MCF 10A (cell line): ENCODE measurements at regions of chr19 and their contacts with region 1.

Region 1: GRCh38 chr19:35468637-35469036 is 20.6 kb downstream of the FFAR2 start:
- DNase-seq: peak; percentile 52
- H3K4me3 Mint-ChIP-seq: no peak overlapping the region
- H3K27ac Mint-ChIP-seq: no peak overlapping the region
- H3K4me1 Mint-ChIP-seq: no peaks in the 10 kb centered on the region
- H3K27me3 Mint-ChIP-seq: peaks cover 22% of the 10 kb centered on the region
- CTCF ChIP-seq: peak; percentile 57

Region 2: DNA sequence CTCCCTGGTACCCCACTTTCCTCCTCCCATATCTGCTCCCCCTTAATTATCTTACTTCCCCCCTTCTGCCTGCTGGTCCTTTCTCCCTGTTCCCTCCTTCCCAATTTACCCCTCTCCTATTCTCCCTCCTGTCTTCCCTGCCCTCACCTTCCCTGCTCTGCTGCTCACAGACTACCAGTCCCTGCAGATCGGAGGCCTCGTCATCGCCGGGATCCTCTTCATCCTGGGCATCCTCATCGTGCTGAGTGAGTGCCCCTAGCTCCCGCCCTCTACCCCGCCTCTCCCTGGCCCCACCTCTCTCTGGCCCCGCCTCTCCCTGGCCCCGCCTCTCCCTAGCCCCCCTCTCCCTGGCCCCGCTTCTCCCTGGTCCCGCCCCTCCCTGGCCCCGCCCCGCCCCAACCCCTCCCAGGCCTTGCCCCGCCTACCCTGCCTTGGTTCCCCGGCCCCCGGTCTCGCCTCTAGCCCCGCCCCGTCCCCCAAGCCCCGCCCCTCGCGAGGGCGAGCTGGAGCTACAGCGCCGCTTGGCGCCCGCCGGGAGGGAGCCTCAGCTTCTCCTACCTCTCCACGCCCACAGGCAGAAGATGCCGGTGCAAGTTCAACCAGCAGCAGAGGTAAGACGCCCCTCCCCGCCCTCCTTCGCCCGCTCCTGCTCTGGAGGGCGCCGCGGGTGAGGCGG is 327.5 kb before region 1 on chr19:
- CTCF ChIA-PET with region 1: no interaction called
- POLR2A ChIA-PET with region 1: no interaction called
- intact Hi-C with region 1: loop called (anchors 10 kb)
- DNase-seq: peak; percentile 93
- H3K4me3 Mint-ChIP-seq: no peak overlapping the region
- H3K27ac Mint-ChIP-seq: no peak overlapping the region
- H3K4me1 Mint-ChIP-seq: peaks cover 15% of the 10 kb centered on the region
- H3K27me3 Mint-ChIP-seq: peaks cover 19% of the 10 kb centered on the region
- CTCF ChIP-seq: peak; percentile 57

Region 3: DNA sequence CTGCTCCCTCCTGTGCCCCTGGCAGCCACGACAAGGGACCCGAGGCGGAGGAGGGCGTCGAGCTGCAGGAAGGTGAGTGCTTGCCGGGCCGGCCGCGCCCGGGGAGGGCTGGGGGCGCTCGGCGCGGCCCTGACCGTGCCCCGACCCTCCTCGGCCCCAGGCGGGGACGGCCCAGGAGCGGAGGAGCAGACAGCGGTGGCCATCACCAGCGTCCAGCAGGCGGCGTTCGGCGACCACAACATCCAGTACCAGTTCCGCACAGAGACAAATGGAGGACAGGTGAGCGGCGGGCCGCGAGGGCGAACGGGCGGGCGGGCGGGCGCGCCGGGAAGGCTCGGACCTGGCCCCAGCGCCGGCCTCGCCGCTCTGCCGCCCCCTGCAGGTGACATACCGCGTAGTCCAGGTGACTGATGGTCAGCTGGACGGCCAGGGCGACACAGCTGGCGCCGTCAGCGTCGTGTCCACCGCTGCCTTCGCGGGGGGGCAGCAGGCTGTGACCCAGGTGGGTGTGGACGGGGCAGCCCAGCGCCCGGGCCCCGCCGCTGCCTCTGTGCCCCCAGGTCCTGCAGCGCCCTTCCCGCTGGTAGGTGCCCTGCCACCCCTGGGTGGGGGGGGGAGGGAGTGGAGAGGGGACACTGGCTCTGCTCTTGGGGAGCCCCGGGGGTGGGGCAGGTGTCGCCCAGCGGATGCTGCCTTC is 199.1 kb before region 1 on chr19:
- CTCF ChIA-PET with region 1: interaction called, 4 read pairs
- POLR2A ChIA-PET with region 1: interaction called, 4 read pairs
- intact Hi-C with region 1: loop called (anchors 1 kb)
- DNase-seq: peak; percentile 86
- H3K4me3 Mint-ChIP-seq: peak overlapping the region; percentile 83
- H3K27ac Mint-ChIP-seq: no peak overlapping the region
- H3K4me1 Mint-ChIP-seq: peaks cover 15% of the 10 kb centered on the region
- H3K27me3 Mint-ChIP-seq: no peaks in the 10 kb centered on the region
- CTCF ChIP-seq: peak; percentile 94

Region 4: GRCh38 chr19:35352448-35353304 is 116.0 kb before region 1 on chr19:
- CTCF ChIA-PET with region 1: interaction called, 143 read pairs
- POLR2A ChIA-PET with region 1: interaction called, 14 read pairs
- intact Hi-C with region 1: loop called (anchors 1 kb)
- DNase-seq: peak; percentile 79
- H3K4me3 Mint-ChIP-seq: no peak overlapping the region
- H3K27ac Mint-ChIP-seq: no peak overlapping the region
- H3K4me1 Mint-ChIP-seq: peaks cover 4% of the 10 kb centered on the region
- H3K27me3 Mint-ChIP-seq: peaks cover 33% of the 10 kb centered on the region
- CTCF ChIP-seq: peak; percentile 79

Region 5: GRCh38 chr19:35417713-35418534 is 50.7 kb before region 1 on chr19:
- CTCF ChIA-PET with region 1: interaction called, 7 read pairs
- POLR2A ChIA-PET with region 1: no interaction called
- intact Hi-C with region 1: loop called (anchors 1 kb)
- DNase-seq: no peak
- H3K4me3 Mint-ChIP-seq: no peak overlapping the region
- H3K27ac Mint-ChIP-seq: no peak overlapping the region
- H3K4me1 Mint-ChIP-seq: no peaks in the 10 kb centered on the region
- H3K27me3 Mint-ChIP-seq: peaks cover 70% of the 10 kb centered on the region
- CTCF ChIP-seq: no peak

Region 6: GRCh38 chr19:35442091-35442490 is 26.5 kb before region 1 on chr19:
- CTCF ChIA-PET with region 1: interaction called, 11 read pairs
- POLR2A ChIA-PET with region 1: no interaction called
- intact Hi-C with region 1: no loop called
- DNase-seq: no peak
- H3K4me3 Mint-ChIP-seq: no peak overlapping the region
- H3K27ac Mint-ChIP-seq: no peak overlapping the region
- H3K4me1 Mint-ChIP-seq: no peaks in the 10 kb centered on the region
- H3K27me3 Mint-ChIP-seq: peaks cover 36% of the 10 kb centered on the region
- CTCF ChIP-seq: no peak

Region 7: DNA sequence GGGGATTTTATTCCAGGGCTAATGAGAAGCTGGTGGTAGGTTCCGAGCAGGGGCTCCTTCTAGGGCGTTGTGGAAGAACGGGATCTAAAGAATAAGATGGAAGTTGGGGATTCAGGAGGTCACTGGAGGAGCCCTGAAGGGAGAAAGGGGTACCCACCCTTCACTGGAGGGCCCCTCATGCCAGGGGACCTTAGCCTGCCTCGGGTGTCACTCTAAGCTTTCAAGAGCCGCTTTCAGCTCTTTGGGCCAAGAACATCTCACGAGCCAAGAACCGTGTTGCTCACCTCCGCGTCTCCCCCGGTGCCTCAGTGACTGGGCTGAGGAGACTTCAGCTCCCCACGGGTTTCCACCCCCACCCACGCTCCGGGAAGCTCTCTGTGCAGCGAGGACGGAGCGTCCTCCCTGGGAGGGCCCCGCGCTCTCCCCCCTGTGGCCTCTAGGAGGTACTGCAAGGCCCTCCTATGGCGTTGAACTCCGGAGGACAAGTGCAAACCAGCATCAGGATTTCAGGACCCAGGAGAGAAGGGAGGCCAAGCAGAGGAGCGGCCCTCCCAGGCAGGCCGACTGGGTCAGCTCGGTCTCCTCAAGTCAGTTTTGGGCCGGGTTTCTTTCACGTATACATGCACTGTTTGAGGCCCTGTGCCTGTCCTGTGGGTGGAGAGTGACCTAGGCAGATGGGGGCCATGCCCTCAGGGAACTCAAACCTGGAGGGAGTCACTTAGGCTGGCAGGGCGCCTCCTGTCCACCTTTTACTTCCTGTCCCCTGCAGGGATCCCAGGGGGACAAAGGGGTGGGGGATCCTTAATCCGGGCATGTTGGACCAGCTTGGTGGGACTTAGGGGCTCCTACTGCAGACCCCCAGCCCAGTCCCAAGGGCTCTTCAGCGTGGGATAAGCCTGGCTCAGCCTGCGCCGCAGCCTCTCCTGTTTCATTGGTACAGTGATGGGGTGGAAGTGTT is 26.7 kb after region 1 on chr19:
- CTCF ChIA-PET with region 1: interaction called, 20 read pairs
- POLR2A ChIA-PET with region 1: interaction called, 3 read pairs
- intact Hi-C with region 1: no loop called
- DNase-seq: peak; percentile 72
- H3K4me3 Mint-ChIP-seq: peak overlapping the region; percentile 49
- H3K27ac Mint-ChIP-seq: no peak overlapping the region
- H3K4me1 Mint-ChIP-seq: no peaks in the 10 kb centered on the region
- H3K27me3 Mint-ChIP-seq: peaks cover 27% of the 10 kb centered on the region
- CTCF ChIP-seq: peak; percentile 89

Region 8: GRCh38 chr19:35693830-35694599 is 225.4 kb after region 1 on chr19:
- CTCF ChIA-PET with region 1: no interaction called
- POLR2A ChIA-PET with region 1: no interaction called
- intact Hi-C with region 1: no loop called
- DNase-seq: peak; percentile 93
- H3K4me3 Mint-ChIP-seq: no peak overlapping the region
- H3K27ac Mint-ChIP-seq: no peak overlapping the region
- H3K4me1 Mint-ChIP-seq: no peaks in the 10 kb centered on the region
- H3K27me3 Mint-ChIP-seq: no peaks in the 10 kb centered on the region
- CTCF ChIP-seq: peak; percentile 95